Activated T-helper 1 cell treated with anti-CD3 and anti-CD28 coated beads, Interleukin-12 subunit alpha, Interleukin-12 subunit beta, Interleukin-2, Interleukin-4 antibody, amounts not matched to agents 30 ng/mL and 10 ng/mL and 1 ng/mL, durations not matched to agents 14 hours and 24 hours and 36 hours (primary cell): ENCODE measurements at regions of chr20 and their contacts with region 1.

Region 1: DNA sequence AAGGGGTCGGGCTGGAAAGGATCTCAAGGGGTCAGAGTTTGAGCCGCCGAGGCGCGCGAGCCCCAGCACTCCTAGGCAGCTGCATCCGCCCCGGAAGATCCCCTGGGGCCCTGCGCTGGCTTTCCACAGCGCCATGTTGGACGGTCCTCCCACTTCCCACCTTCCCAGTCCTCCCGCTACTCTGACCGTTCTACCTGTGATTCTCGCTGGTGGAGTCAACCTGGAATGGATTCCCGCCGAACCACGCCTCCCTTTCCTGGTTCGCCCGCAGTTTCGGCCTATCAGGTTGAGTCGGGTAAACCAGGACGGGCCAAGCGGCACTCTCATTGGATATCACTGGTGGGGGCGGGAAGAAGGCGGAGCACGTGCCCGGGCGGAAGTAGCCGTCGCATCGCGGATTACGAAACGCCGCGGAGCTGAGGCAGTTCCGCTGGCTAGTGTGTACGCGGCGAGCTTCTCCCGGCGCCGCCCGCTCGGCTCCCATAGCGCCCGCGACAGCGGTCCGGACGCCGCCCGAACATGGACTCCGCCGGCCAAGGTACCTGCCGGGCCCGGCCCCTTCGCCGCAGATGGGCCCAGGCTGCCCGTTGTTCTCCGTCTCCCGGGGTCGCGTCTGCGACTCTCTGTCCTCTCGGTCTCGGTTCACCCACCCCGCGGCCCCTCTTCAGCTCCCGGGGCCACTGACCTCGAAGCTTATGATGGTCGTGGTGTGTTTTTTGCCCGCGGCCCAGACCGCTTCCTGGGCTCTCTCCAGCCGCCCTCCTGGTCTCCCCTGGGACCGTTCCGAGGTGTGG is at the start of gene TPD52L2:
- DNase-seq: peak; percentile 98
- H3K4me3 Mint-ChIP-seq: peak within 1 kb of the TSS; percentile 96
- H3K27ac Mint-ChIP-seq: peak within 1 kb of the TSS; percentile 96
- H3K4me1 Mint-ChIP-seq: peaks cover 19% of the 10 kb centered on the region
- H3K27me3 Mint-ChIP-seq: no peaks in the 10 kb centered on the region
- total RNA-seq, gene TPD52L2: 65.9 and 73.2 TPM in 2 replicates

Region 2: DNA sequence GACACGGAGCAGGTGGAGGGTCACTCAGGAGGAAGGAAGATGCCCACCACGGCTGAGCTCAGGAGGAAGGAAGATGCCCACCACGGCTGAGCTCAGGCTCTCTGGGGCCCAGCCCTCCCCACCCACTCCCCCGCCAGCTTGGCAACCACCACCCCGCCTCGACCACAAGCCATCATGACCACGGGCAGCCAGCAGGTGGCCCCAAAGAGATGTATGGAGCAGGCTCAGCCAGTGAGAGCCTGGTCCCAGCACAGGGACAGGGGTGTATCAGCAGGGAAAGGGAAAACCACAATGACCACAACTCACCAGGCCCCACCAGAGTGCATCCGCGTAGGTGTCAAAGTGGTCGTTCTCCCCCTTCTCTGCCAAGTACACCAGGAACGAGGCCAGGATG is 422.9 kb before region 1 on chr20:
- intact Hi-C with region 1: no loop called
- DNase-seq: peak; percentile 35
- H3K4me3 Mint-ChIP-seq: no peak overlapping the region
- H3K27ac Mint-ChIP-seq: no peak overlapping the region
- H3K4me1 Mint-ChIP-seq: peaks cover 16% of the 10 kb centered on the region
- H3K27me3 Mint-ChIP-seq: peaks cover 6% of the 10 kb centered on the region

Region 3: GRCh38 chr20:63520504-63520933 is 344.5 kb before region 1 on chr20 and contains the start of gene PPDPF:
- intact Hi-C with region 1: loop called (anchors 1 kb)
- DNase-seq: peak; percentile 81
- H3K4me3 Mint-ChIP-seq: peak within 1 kb of the TSS; percentile 84
- H3K27ac Mint-ChIP-seq: peak within 1 kb of the TSS; percentile 70
- H3K4me1 Mint-ChIP-seq: no peaks in the 10 kb centered on the region
- H3K27me3 Mint-ChIP-seq: peaks cover 4% of the 10 kb centered on the region
- total RNA-seq, gene PPDPF: 117 and 122 TPM in 2 replicates

Region 4: GRCh38 chr20:63627129-63627750 is 237.8 kb before region 1 on chr20:
- intact Hi-C with region 1: loop called (anchors 2 kb)
- DNase-seq: peak; percentile 95
- H3K4me3 Mint-ChIP-seq: peak overlapping the region; percentile 100
- H3K27ac Mint-ChIP-seq: peak overlapping the region; percentile 98
- H3K4me1 Mint-ChIP-seq: peaks cover 23% of the 10 kb centered on the region
- H3K27me3 Mint-ChIP-seq: no peaks in the 10 kb centered on the region

Region 5: GRCh38 chr20:63734111-63734945 is 130.7 kb before region 1 on chr20:
- intact Hi-C with region 1: loop called (anchors 2 kb)
- DNase-seq: no peak
- H3K4me3 Mint-ChIP-seq: no peak overlapping the region
- H3K27ac Mint-ChIP-seq: no peak overlapping the region
- H3K4me1 Mint-ChIP-seq: peaks cover 25% of the 10 kb centered on the region
- H3K27me3 Mint-ChIP-seq: no peaks in the 10 kb centered on the region

Region 6: GRCh38 chr20:63819224-63819921 is 45.7 kb before region 1 on chr20:
- intact Hi-C with region 1: no loop called
- DNase-seq: no peak
- H3K4me3 Mint-ChIP-seq: no peak overlapping the region
- H3K27ac Mint-ChIP-seq: peak overlapping the region; percentile 8
- H3K4me1 Mint-ChIP-seq: no peaks in the 10 kb centered on the region
- H3K27me3 Mint-ChIP-seq: peaks cover 6% of the 10 kb centered on the region

Region 7: GRCh38 chr20:63850689-63851559 is 14.1 kb before region 1 on chr20:
- intact Hi-C with region 1: loop called (anchors 2 kb)
- DNase-seq: no peak
- H3K4me3 Mint-ChIP-seq: no peak overlapping the region
- H3K27ac Mint-ChIP-seq: no peak overlapping the region
- H3K4me1 Mint-ChIP-seq: peaks cover 10% of the 10 kb centered on the region
- H3K27me3 Mint-ChIP-seq: peaks cover 14% of the 10 kb centered on the region

Region 8: DNA sequence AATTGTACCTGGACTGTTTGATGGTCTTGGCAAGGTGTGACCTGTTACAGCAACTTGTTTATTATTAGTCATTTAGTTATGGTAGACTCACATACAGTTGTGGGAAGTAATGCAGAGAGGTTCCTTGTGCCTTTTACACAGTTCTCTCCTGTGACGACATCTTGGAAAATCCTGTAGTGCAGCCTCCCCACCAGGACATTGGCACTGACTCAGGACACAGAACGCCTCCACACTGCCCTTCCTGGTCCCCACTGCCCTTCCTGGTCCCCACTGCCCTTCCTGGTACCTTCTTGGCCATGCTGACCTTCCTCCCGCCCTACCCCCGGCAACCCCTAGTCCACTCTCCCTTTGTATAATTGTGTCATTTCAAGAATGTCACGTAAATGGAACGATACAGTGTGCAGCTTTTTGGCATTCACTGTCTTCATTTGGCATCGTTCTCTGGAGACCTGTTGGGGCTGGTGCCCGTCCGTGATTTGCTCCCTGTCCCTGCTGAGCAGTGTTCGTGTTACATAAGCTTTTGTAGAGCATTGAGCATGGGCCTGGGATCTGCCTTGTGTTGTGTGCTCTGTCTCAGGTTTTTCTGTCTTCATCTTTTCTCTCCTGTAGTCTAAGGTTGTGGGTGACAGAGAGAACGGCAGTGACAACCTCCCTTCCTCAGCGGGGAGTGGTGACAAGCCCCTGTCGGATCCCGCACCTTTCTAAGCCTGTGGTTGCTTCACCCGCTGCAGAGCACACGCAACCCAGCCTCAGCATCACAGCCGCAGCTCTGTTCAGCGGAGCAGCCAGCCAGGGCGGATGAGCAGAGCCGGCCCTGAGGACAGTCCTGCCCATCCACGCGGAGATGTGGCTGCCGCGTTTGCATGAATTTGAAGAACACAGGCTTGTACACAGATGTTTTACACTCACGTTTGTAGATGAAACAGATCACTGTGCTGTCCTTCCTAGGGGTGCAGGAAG is 24.5 kb after region 1 on chr20:
- intact Hi-C with region 1: no loop called
- DNase-seq: no peak
- H3K4me3 Mint-ChIP-seq: no peak overlapping the region
- H3K27ac Mint-ChIP-seq: no peak overlapping the region
- H3K4me1 Mint-ChIP-seq: peaks cover 5% of the 10 kb centered on the region
- H3K27me3 Mint-ChIP-seq: peaks cover 1% of the 10 kb centered on the region

Region 9: GRCh38 chr20:63980806-63981728 is 116.0 kb after region 1 on chr20 and contains the start of gene PRPF6:
- intact Hi-C with region 1: loop called (anchors 1 kb)
- DNase-seq: peak; percentile 94
- H3K4me3 Mint-ChIP-seq: peak within 1 kb of the TSS; percentile 98
- H3K27ac Mint-ChIP-seq: peak within 1 kb of the TSS; percentile 99
- H3K4me1 Mint-ChIP-seq: peaks cover 64% of the 10 kb centered on the region
- H3K27me3 Mint-ChIP-seq: no peaks in the 10 kb centered on the region
- total RNA-seq, gene PRPF6: 82.3 and 83.6 TPM in 2 replicates